ENCODE measurements at regions of chr20 and their contacts with region 1.

Region 1: GRCh38 chr20:17536944-17537444 is 5.8 kb upstream of the BFSP1 start:
- DNase-seq: peak; percentile 57 to 63
- ATAC-seq: peak; percentile 95 to 99 (median 98)
- H3K4me3 ChIP-seq: no peak overlapping the region
- H3K27ac ChIP-seq: no peak overlapping the region
- H3K4me1 ChIP-seq: no peaks in the 10 kb centered on the region
- H3K27me3 ChIP-seq: no peaks in the 10 kb centered on the region
- CTCF ChIP-seq: peak; percentile 92

Region 2: GRCh38 chr20:17504898-17505635 is 31.9 kb before region 1 on chr20:
- intact Hi-C with region 1: loop called in 1 of 2 experiments (anchors 2 kb)
- DNase-seq: peak; percentile 49 to 68
- ATAC-seq: peak; percentile 68 to 89 (median 74)
- H3K4me3 ChIP-seq: peak overlapping the region; percentile 63
- H3K27ac ChIP-seq: no peak overlapping the region
- H3K4me1 ChIP-seq: no peaks in the 10 kb centered on the region
- H3K27me3 ChIP-seq: no peaks in the 10 kb centered on the region
- CTCF ChIP-seq: peak; percentile 74

Region 3: GRCh38 chr20:17518339-17519052 is 18.5 kb before region 1 on chr20:
- intact Hi-C with region 1: no loop called
- DNase-seq: peak in 1 of 2 donors; percentile 50
- ATAC-seq: no peak
- H3K4me3 ChIP-seq: no peak overlapping the region
- H3K27ac ChIP-seq: no peak overlapping the region
- H3K4me1 ChIP-seq: peaks cover 2% of the 10 kb centered on the region
- H3K27me3 ChIP-seq: no peaks in the 10 kb centered on the region
- CTCF ChIP-seq: no peak

Region 4: DNA sequence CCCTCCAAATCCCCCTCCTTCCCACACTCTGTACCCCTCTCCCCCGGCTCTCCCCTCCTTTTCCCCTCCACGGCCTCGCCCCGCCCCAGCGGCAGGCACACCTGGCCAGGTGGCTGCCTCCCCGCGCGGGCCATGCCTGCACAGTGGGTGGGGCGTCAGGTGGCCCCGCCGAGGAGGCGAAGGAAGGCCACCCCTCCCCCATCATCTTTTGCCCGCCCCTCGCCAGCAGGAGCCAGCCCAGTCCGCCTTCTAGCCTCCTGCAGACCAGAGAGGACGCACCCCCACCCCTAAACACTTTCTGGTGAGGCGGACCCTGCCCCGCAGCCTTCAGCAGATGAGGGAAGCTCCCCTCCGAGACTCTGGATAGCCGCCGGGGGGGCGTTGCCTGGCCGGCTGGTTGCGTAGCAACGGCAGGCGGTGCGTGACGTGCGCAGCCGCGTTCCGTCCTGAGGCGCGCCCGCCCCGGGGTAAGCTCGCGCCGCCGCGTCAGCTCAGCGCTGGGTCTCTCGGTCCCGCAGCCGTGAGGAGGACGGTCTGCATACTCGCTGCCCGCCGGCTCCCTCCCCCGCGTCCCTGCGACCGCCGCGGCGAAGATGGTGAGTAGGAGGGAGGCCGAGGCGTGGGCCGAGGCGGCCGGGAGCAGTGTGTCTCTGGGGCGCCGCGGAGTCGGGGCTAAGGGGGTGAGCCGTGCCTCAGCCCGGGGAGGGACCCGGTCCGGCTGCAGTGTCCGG is 32.8 kb after region 1 on chr20 and contains the start of gene DSTN:
- intact Hi-C with region 1: loop called in 1 of 2 experiments (anchors 5 kb)
- DNase-seq: peak; percentile 92 to 96
- ATAC-seq: peak; percentile 95 to 97 (median 96)
- H3K4me3 ChIP-seq: peak within 1 kb of the TSS; percentile 84
- H3K27ac ChIP-seq: peak within 1 kb of the TSS; percentile 97
- H3K4me1 ChIP-seq: peaks cover 14% of the 10 kb centered on the region
- H3K27me3 ChIP-seq: no peaks in the 10 kb centered on the region
- CTCF ChIP-seq: no peak
- total RNA-seq, gene DSTN: 45.6 to 82.3 (median 66.2) TPM

Region 5: DNA sequence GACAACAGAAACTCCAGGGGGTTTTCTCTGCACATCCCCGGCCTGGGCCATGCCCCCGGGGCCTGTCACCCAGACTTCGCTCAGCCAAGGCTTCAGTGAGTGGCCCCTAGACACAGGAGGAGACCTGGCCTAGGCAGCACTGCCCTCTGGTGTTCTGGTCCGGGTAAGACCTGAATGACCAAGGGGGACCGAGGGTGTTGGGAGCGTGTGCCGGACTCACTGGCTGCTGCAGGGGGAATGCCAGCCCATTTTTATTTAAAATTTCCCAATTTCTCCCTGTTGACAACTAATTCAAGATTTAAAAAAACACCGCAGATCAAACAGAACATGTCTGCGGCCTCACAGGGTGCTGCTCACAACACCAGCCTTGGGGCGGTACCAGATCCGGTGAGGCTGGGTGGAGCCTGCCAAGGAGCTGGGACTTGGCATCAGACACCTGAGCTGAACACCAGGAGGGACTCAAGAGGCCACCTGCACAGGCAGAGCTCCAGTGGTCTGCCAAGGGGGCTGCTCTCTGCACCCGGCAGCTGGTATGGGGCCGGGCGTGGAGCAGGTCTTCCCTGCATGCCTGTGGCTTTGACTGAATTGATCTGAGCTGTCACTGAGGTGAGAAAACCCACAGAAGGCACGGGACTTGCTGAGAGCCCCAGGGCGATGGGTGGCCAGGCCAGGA is 80.7 kb after region 1 on chr20:
- intact Hi-C with region 1: loop called (anchors 1 kb)
- DNase-seq: peak in 1 of 2 donors; percentile 79
- ATAC-seq: peak; percentile 67 to 83 (median 76)
- H3K4me3 ChIP-seq: no peak overlapping the region
- H3K27ac ChIP-seq: no peak overlapping the region
- H3K4me1 ChIP-seq: peaks cover 6% of the 10 kb centered on the region
- H3K27me3 ChIP-seq: no peaks in the 10 kb centered on the region
- CTCF ChIP-seq: peak; percentile 67

Region 6: DNA sequence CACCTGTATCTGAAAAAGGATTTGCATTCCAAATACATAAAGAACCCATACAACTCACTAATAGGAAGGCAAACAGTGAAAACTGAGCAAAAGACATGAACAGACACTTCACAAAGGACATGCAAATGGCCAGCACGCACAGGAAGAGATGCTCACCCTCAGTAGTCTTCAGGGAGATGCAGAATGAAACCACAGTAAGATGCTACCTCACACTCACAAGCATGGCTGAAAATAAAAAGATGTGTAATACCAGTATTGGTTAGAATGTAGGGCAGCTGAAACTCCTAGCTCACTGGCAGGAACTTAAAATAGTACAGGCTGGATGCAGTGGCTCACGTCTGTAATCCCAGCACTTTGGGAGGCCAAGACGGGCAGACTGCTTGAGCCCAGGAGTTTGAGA is 367.0 kb after region 1 on chr20:
- intact Hi-C with region 1: loop called in 1 of 2 experiments (anchors 10 kb)
- DNase-seq: no peak
- ATAC-seq: peak in 3 of 4 donors; percentile 38 to 94 (median 62)
- H3K4me3 ChIP-seq: no peak overlapping the region
- H3K27ac ChIP-seq: peak overlapping the region; percentile 33
- H3K4me1 ChIP-seq: no peaks in the 10 kb centered on the region
- H3K27me3 ChIP-seq: no peaks in the 10 kb centered on the region
- CTCF ChIP-seq: no peak

Region 7: DNA sequence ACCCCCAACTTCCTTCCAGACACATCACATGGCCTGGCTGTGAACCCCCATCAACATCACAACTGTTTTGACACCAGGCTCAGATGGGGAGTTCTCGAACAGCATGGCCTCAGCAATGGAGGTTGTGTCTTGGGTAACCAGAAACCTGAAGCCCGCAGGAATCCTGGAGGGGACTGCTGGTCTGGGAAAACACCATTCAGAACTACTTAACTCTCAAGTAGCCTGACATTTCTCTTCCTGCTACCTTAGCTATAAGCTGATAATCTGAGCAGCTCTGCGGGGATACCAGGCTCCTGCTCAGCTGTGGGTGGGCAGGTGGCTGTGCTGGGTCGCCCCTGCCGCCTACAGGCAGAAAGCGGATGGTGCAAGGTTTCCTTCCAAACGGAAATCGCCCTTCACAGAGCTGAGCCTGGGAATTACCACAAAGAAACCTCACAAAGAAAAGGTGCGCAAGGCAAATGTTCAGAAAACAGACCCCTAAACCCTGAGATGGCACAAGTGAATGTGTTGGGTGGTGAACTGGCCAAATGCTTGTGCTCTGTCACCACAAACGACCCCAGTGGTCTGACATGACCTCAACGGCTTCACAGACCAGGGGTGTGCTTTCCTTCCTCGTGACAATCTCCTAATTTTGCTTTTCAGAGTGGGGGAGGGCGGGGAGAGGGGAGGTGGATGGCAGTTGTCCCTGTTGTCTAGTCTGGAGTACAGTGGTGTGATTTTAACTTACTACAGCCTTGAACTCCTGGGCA is 402.1 kb after region 1 on chr20:
- intact Hi-C with region 1: loop called in 1 of 2 experiments (anchors 2 kb)
- DNase-seq: peak; percentile 60 to 80
- ATAC-seq: peak; percentile 77 to 88 (median 84)
- H3K4me3 ChIP-seq: no peak overlapping the region
- H3K27ac ChIP-seq: peak overlapping the region; percentile 38
- H3K4me1 ChIP-seq: peaks cover 27% of the 10 kb centered on the region
- H3K27me3 ChIP-seq: no peaks in the 10 kb centered on the region
- CTCF ChIP-seq: peak; percentile 90

Region 8: DNA sequence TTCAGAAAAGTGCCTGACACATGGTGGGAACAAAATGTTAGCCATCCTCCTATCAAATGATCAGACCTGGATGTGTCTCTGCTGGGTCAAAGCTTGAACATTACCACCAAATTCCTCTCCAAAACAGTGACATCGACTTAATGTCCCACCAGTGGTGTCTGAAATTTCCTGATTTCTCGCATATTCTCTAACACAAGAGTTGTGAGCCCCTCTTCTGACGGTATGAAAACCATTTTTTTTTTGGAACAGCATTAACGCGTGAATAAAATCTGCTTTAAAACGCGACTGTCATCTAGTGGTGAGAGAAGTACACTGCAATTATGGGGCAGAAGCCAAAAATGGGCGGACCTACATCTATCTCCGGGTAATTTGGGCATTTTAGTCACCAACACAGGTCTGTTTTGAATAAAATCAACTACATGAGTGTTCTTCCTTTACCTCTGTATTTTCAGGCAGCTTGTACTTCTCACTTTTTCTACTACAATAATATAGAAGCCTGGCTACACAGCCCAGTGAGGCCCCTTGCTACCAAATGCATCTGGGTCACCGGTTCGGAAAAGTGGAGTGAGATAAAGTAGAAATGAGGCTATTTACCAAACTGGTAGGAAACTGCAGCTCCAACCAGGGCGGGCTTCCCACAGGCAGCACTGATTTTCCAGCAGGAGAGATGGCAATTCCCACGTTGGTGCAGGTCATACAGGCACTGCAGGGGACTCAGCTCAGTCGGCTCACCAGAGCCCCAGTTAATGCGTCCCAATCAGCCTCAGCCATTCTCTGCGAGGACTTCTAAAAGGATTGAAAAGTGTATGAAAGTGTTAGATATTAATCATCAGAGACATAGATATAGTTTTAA is 459.2 kb after region 1 on chr20:
- intact Hi-C with region 1: loop called in 1 of 2 experiments (anchors 10 kb)
- DNase-seq: no peak
- ATAC-seq: peak; percentile 70 to 88 (median 75)
- H3K4me3 ChIP-seq: no peak overlapping the region
- H3K27ac ChIP-seq: no peak overlapping the region
- H3K4me1 ChIP-seq: no peaks in the 10 kb centered on the region
- H3K27me3 ChIP-seq: no peaks in the 10 kb centered on the region
- CTCF ChIP-seq: peak; percentile 96

Measured in psoas muscle (tissue), 8 donors.